ENCODE measurements at regions of chr2 and their contacts with region 1.

Region 1: DNA sequence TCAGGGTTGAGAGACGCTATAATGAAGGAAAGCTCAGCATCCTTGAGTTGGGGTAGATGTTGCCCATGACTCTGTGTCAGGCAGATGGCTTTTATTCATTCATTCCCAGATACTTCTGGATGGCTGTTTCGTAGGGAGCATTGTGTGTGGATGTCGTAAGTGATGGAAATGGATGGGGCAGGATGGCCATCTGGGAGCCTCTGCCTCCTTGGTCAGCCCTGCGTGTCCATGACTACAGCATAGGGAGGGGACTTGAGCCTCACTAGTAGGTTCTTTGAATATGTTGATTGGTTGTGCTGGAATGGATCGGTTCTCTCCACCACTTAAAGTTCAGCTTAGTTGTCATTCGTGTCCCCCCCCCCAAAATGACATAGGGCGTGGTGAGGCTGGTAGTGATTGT is 44.9 kb downstream of the TGOLN2 start:
- DNase-seq: no peak
- H3K4me3 ChIP-seq: no peak overlapping the region
- H3K27ac ChIP-seq: no peak overlapping the region
- H3K4me1 ChIP-seq: peaks cover 23% of the 10 kb centered on the region
- H3K27me3 ChIP-seq: no peaks in the 10 kb centered on the region
- CTCF ChIP-seq: no peak

Region 2: GRCh38 chr2:85057226-85057962 is 225.5 kb before region 1 on chr2:
- intact Hi-C with region 1: no loop called
- DNase-seq: no peak
- H3K4me3 ChIP-seq: no peak overlapping the region
- H3K27ac ChIP-seq: no peak overlapping the region
- H3K4me1 ChIP-seq: no peaks in the 10 kb centered on the region
- H3K27me3 ChIP-seq: no peaks in the 10 kb centered on the region
- CTCF ChIP-seq: no peak

Region 3: GRCh38 chr2:85132834-85133637 is 149.9 kb before region 1 on chr2 and contains the start of gene TCF7L1:
- intact Hi-C with region 1: loop called (anchors 5 kb)
- DNase-seq: peak; percentile 86
- H3K4me3 ChIP-seq: peak within 1 kb of the TSS; percentile 80
- H3K27ac ChIP-seq: peak within 1 kb of the TSS; percentile 81
- H3K4me1 ChIP-seq: peaks cover 62% of the 10 kb centered on the region
- H3K27me3 ChIP-seq: no peaks in the 10 kb centered on the region
- CTCF ChIP-seq: peak; percentile 92
- total RNA-seq, gene TCF7L1: 7.0 TPM

Region 4: GRCh38 chr2:85209887-85210286 is 73.0 kb before region 1 on chr2:
- intact Hi-C with region 1: no loop called
- DNase-seq: no peak
- H3K4me3 ChIP-seq: no peak overlapping the region
- H3K27ac ChIP-seq: no peak overlapping the region
- H3K4me1 ChIP-seq: peaks cover 36% of the 10 kb centered on the region
- H3K27me3 ChIP-seq: no peaks in the 10 kb centered on the region
- CTCF ChIP-seq: no peak

Region 5: GRCh38 chr2:85485815-85486214 is 202.9 kb after region 1 on chr2:
- intact Hi-C with region 1: no loop called
- DNase-seq: no peak
- H3K4me3 ChIP-seq: no peak overlapping the region
- H3K27ac ChIP-seq: no peak overlapping the region
- H3K4me1 ChIP-seq: no peaks in the 10 kb centered on the region
- H3K27me3 ChIP-seq: no peaks in the 10 kb centered on the region
- CTCF ChIP-seq: no peak